RWPE1 (cell line): ENCODE measurements at regions of chr20 and their contacts with region 1.

Region 1: GRCh38 chr20:35092524-35093266 is at the start of gene TRPC4AP:
- DNase-seq: peak; percentile 95
- H3K27ac ChIP-seq: peak within 1 kb of the TSS; percentile 80
- CTCF ChIP-seq: peak; percentile 100

Region 2: GRCh38 chr20:35108925-35109324 is 16.2 kb after region 1 on chr20:
- CTCF ChIA-PET with region 1: interaction called, 15 read pairs
- POLR2A ChIA-PET with region 1: no interaction called
- DNase-seq: peak; percentile 82
- H3K27ac ChIP-seq: no peak overlapping the region
- CTCF ChIP-seq: no peak

Region 3: DNA sequence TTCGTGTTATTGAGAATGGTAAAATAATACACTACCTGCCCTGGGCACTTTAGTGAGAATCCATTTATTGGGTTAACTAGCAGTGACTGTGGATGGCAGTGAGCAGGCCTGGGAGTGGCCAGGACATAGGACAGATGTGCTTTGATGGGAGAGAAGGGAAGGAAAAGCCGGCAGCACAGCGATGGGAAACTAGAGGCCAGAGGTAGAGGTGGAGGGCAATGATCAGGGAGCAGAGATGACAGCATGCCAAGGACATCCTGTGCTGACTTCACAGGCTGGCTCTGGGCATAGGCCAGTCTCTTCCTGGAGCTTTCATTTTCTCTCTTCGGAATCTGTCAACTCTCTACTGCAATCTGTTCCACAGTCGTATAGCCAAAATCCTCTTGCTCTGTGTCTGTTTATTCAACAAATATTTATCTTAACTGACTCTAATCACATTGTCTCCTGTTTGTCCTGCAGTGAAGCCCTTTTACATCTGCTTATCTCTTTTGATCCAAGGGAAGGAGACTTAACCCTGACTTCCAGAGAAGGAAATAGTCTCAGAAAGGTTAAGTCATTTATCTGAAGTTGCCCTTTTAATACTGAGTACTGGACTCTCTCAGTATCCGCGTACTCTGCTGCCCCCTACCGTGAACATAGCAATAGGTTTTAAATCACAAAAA is 115.4 kb after region 1 on chr20:
- CTCF ChIA-PET with region 1: interaction called, 22 read pairs
- POLR2A ChIA-PET with region 1: no interaction called
- DNase-seq: peak; percentile 79
- H3K27ac ChIP-seq: peak overlapping the region; percentile 69
- CTCF ChIP-seq: peak; percentile 95